Activated T-helper 1 cell treated with anti-CD3 and anti-CD28 coated beads, Interleukin-12 subunit alpha, Interleukin-12 subunit beta, Interleukin-2, Interleukin-4 antibody, amounts not matched to agents 30 ng/mL and 10 ng/mL and 1 ng/mL, durations not matched to agents 14 hours and 24 hours and 36 hours (primary cell): ENCODE measurements at regions of chr2 and their contacts with region 1.

Region 1: GRCh38 chr2:230751062-230751461 is 38.4 kb downstream of the CAB39 start:
- DNase-seq: peak; percentile 12
- H3K4me3 Mint-ChIP-seq: no peak overlapping the region
- H3K27ac Mint-ChIP-seq: peak overlapping the region; percentile 83
- H3K4me1 Mint-ChIP-seq: peaks cover 77% of the 10 kb centered on the region
- H3K27me3 Mint-ChIP-seq: no peaks in the 10 kb centered on the region

Region 2: DNA sequence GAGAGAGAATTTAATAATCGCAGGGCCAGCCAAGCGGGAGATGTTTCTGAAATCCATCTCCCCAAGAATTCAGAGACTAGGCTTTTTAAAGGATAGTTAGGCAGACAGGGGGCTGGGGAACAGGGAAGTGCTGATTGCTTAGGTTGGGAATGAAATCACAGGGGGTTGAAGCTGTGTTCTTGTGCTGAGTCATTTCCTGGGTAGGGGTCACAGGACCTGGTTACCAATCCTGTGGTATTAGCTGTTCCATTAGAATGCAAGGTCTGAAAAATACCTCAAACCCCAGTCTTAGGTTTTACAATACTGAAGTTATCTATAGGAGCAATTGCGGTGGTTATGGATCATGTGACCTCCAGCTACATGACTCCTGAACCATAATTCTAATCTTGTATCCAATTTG is 521.0 kb before region 1 on chr2:
- intact Hi-C with region 1: no loop called
- DNase-seq: no peak
- H3K4me3 Mint-ChIP-seq: peak overlapping the region; percentile 78
- H3K27ac Mint-ChIP-seq: peak overlapping the region; percentile 53
- H3K4me1 Mint-ChIP-seq: peaks cover 62% of the 10 kb centered on the region
- H3K27me3 Mint-ChIP-seq: no peaks in the 10 kb centered on the region

Region 3: GRCh38 chr2:230496891-230497290 is 254.2 kb before region 1 on chr2:
- intact Hi-C with region 1: no loop called
- DNase-seq: no peak
- H3K4me3 Mint-ChIP-seq: peak overlapping the region; percentile 30
- H3K27ac Mint-ChIP-seq: peak overlapping the region; percentile 77
- H3K4me1 Mint-ChIP-seq: peaks cover 25% of the 10 kb centered on the region
- H3K27me3 Mint-ChIP-seq: no peaks in the 10 kb centered on the region

Region 4: DNA sequence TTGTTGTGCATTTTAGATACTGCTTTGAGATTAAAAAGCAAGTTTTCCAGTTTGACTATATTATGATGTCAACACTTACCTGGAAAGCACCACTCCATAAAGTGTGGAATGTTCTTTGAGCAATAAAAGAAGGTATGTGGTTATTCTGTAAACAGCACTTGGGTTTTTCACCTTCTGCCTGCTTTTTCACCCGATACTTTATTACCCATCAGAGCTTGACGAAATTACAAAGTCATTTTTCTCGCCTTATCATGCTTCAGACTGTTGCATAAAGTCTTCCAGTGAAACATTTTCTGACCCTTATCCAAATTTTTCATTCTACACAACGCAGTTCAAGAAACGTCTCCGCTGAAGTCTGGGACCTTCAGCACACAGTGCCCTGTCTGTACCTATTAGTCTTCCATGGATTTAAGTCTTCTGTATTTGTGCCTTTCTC is 13.3 kb before region 1 on chr2:
- intact Hi-C with region 1: loop called (anchors 1 kb)
- DNase-seq: no peak
- H3K4me3 Mint-ChIP-seq: peak overlapping the region; percentile 37
- H3K27ac Mint-ChIP-seq: peak overlapping the region; percentile 64
- H3K4me1 Mint-ChIP-seq: peaks cover 82% of the 10 kb centered on the region
- H3K27me3 Mint-ChIP-seq: no peaks in the 10 kb centered on the region

Region 5: GRCh38 chr2:230773039-230773773 is 22.1 kb after region 1 on chr2:
- intact Hi-C with region 1: loop called (anchors 2 kb)
- DNase-seq: no peak
- H3K4me3 Mint-ChIP-seq: no peak overlapping the region
- H3K27ac Mint-ChIP-seq: peak overlapping the region; percentile 56
- H3K4me1 Mint-ChIP-seq: peaks cover 91% of the 10 kb centered on the region
- H3K27me3 Mint-ChIP-seq: no peaks in the 10 kb centered on the region

Region 6: DNA sequence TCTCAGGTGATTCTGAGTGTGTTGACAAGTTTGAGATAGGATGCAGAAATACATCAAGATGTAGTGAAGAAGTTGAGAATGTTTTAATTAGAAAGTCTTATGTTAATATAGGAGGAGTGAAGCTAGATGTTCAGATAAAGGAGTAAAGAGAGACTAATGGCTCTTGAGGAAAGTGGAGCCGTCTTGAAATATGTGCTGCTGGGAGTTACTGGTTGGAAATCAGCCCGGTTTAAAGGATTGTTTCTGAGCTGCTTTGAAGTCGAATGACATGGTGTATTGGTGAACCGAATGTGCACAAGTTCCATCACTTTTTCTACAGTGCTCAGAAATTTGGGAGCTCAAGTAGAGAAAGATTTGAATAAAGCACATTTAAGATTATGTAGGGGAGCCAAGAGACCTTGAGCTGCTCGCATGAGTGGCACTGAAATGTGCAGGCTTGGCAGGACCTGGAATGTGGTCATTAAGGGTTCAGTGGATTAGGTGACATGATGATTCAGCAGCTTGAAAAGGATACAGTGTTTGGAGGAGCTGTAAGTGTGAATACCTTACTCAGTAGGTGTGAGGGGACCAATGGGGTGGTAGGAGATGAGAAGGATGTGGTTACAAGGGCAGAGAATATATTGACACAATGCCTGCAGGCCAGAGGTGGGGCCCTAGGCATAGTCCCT is 30.2 kb after region 1 on chr2:
- intact Hi-C with region 1: loop called (anchors 1 kb)
- DNase-seq: peak; percentile 47
- H3K4me3 Mint-ChIP-seq: peak overlapping the region; percentile 30
- H3K27ac Mint-ChIP-seq: peak overlapping the region; percentile 75
- H3K4me1 Mint-ChIP-seq: peaks cover 73% of the 10 kb centered on the region
- H3K27me3 Mint-ChIP-seq: no peaks in the 10 kb centered on the region

Region 7: DNA sequence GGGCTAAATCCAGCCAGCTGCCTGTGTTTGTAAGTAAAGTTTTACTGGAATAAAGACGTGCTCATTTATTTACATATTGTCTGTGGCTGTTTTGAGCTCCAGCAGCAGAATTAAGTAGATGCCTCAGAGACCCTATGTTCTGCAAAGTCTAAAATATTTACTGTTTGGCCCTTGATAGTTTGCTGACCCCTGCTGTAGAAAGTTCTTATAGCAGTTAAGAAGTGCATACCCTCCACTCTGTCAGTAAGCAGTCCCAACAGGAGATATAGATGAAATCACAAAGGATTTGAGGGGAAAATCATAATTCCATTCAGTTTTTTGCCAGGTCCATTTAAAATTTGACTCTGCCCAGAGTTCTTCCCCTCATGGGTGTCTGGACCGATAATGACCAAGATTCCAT is 63.6 kb after region 1 on chr2:
- intact Hi-C with region 1: no loop called
- DNase-seq: no peak
- H3K4me3 Mint-ChIP-seq: no peak overlapping the region
- H3K27ac Mint-ChIP-seq: no peak overlapping the region
- H3K4me1 Mint-ChIP-seq: peaks cover 39% of the 10 kb centered on the region
- H3K27me3 Mint-ChIP-seq: no peaks in the 10 kb centered on the region